HCT116 (cell line): ENCODE measurements at regions of chr11 and their contacts with region 1.

Region 1: DNA sequence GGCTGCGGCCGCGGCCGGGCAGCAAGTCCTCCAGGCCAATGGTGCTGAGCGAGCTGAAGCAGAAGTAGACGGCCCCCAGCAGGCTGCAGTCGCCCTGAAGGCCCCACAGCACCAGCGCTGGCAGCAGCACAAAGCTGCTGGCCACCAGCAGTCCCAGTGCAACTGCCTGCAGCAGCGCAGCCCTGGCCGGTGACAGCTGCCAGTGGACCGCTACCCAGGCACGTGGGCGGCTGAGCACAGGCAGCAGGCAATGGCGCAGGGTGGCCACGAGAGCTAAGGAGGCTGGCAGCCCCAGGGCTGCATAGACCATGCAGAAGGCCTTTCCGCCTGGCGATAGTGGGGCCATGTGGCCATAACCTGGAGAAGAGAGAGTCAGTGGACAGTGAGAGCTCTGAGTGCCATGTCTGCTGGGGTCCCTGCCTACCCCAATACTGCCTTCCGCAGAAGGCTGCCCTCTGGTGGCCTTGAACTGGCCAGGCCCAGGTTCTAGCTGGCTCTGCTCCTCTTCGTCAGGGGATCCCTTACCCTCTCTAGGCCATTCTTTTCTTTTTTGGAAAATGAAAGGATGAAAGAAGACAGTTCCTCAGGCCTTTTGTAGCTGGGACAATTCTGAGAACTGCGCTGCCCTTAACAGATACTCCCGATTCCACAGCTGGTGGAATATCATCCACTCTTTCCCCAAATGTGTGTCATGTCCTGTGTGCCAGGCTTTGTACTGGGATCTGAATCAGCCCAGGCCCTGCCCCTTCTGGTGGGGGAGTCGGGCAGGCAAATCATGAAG is 1.9 kb downstream of the KCNK7 start:
- DNase-seq: no peak
- ATAC-seq: peak; percentile 72
- H3K4me3 ChIP-seq: no peak overlapping the region
- H3K27ac ChIP-seq: peak overlapping the region; percentile 26; the same call in 1 of the 2 replicates
- H3K4me1 ChIP-seq: peaks cover 13 to 21% of the 10 kb centered on the region in 2 experiments
- H3K27me3 ChIP-seq: no peaks in the 10 kb centered on the region
- CTCF ChIP-seq: peak; percentile 52 to 86 (median 83); a peak in 5 of 6 replicates
- POLR2A ChIP-seq: no peak
- RAD21 ChIP-seq: peak; percentile 53

Region 2: GRCh38 chr11:65540297-65541092 is 53.2 kb before region 1 on chr11:
- CTCF ChIA-PET with region 1: interaction called, 28 read pairs
- POLR2A ChIA-PET with region 1: interaction called, 4 read pairs
- RAD21 ChIA-PET with region 1: interaction called, 3 to 5 read pairs
- intact Hi-C with region 1: no loop called
- DNase-seq: peak; percentile 64
- ATAC-seq: peak; percentile 73
- H3K4me3 ChIP-seq: peak overlapping the region; percentile 68 to 85
- H3K27ac ChIP-seq: peak overlapping the region; percentile 100
- H3K4me1 ChIP-seq: peaks cover 13 to 39% of the 10 kb centered on the region in 2 experiments; a peak in 3 of 4 replicates
- H3K27me3 ChIP-seq: no peaks in the 10 kb centered on the region
- CTCF ChIP-seq: peak in 2 of 3 experiments; percentile 82 to 85; a peak in 4 of 6 replicates
- POLR2A ChIP-seq: no peak
- RAD21 ChIP-seq: no peak

Region 3: GRCh38 chr11:65569973-65570918 is 23.5 kb before region 1 on chr11 and contains the start of gene ZNRD2:
- CTCF ChIA-PET with region 1: interaction called, 15 read pairs
- POLR2A ChIA-PET with region 1: interaction called, 3 read pairs
- RAD21 ChIA-PET with region 1: no interaction called
- intact Hi-C with region 1: no loop called
- DNase-seq: peak; percentile 97
- ATAC-seq: peak; percentile 72
- H3K4me3 ChIP-seq: peak within 1 kb of the TSS; percentile 97 to 100
- H3K27ac ChIP-seq: peak within 1 kb of the TSS; percentile 94
- H3K4me1 ChIP-seq: peaks cover 35 to 68% of the 10 kb centered on the region in 2 experiments
- H3K27me3 ChIP-seq: no peaks in the 10 kb centered on the region
- CTCF ChIP-seq: peak in 1 of 3 experiments; percentile 29; a peak in 2 of 6 replicates
- POLR2A ChIP-seq: peak; percentile 36
- RAD21 ChIP-seq: no peak
- total RNA-seq, gene ZNRD2: 66.8 TPM

Region 4: GRCh38 chr11:65575568-65576231 is 18.0 kb before region 1 on chr11 and contains the start of gene EHBP1L1:
- CTCF ChIA-PET with region 1: interaction called, 15 read pairs
- POLR2A ChIA-PET with region 1: interaction called, 3 read pairs
- RAD21 ChIA-PET with region 1: no interaction called
- intact Hi-C with region 1: no loop called
- DNase-seq: no peak
- ATAC-seq: peak; percentile 33
- H3K4me3 ChIP-seq: peak within 1 kb of the TSS; percentile 74 to 78
- H3K27ac ChIP-seq: peak within 1 kb of the TSS; percentile 97
- H3K4me1 ChIP-seq: peaks cover 47 to 62% of the 10 kb centered on the region in 2 experiments
- H3K27me3 ChIP-seq: no peaks in the 10 kb centered on the region
- CTCF ChIP-seq: no peak
- POLR2A ChIP-seq: peak; percentile 29
- RAD21 ChIP-seq: no peak
- total RNA-seq, gene EHBP1L1: 105 TPM

Region 5: DNA sequence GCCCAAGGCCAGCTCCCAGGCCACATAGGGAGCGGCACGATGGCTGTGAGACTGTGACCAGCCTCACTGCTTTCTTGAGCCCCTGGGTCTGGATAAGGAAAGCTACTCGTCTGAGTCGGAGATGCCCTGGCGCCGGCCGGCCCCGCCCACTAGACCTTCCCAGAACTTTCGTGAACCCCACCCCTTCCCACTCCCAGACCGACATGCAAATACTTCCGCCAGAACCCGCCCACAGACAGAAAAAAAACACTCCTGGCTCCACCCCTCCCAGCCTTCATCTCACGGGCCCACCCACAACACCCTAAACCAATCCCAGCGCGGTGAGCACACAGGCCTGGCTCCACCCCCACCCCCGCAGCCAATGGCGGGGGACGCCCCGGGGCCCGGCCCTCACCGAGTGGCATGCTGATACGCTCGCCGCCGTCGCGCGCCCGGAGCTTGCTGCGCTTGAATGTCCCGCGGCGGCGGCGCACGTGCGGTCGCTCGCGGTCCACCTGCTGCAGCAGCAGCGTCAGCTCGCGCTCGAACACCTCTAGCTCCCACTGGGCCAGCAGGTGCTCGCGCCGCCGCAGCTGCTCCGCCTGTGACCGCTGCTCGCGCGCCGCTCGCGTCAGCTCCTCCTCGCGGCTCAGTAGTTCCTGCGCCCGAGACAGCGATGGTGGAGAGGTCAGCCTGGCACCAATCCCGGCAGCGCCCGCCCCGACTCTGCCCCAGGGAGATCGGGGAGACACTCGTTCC is 13.3 kb after region 1 on chr11:
- CTCF ChIA-PET with region 1: interaction called, 13 read pairs
- POLR2A ChIA-PET with region 1: no interaction called
- RAD21 ChIA-PET with region 1: no interaction called
- intact Hi-C with region 1: no loop called
- DNase-seq: peak; percentile 89
- ATAC-seq: peak; percentile 98
- H3K4me3 ChIP-seq: peak overlapping the region; percentile 7 to 35; a peak in 3 of 4 replicates
- H3K27ac ChIP-seq: peak overlapping the region; percentile 67
- H3K4me1 ChIP-seq: peaks cover 8 to 44% of the 10 kb centered on the region in 2 experiments; a peak in 3 of 4 replicates
- H3K27me3 ChIP-seq: no peaks in the 10 kb centered on the region
- CTCF ChIP-seq: no peak
- POLR2A ChIP-seq: no peak
- RAD21 ChIP-seq: no peak

Region 6: GRCh38 chr11:65615229-65615941 is 21.7 kb after region 1 on chr11 and contains the start of gene PCNX3:
- CTCF ChIA-PET with region 1: interaction called, 15 read pairs
- POLR2A ChIA-PET with region 1: interaction called, 5 read pairs
- RAD21 ChIA-PET with region 1: no interaction called
- intact Hi-C with region 1: no loop called
- DNase-seq: peak; percentile 100
- ATAC-seq: peak; percentile 86
- H3K4me3 ChIP-seq: peak within 1 kb of the TSS; percentile 86 to 98
- H3K27ac ChIP-seq: peak within 1 kb of the TSS; percentile 86
- H3K4me1 ChIP-seq: peaks cover 10 to 43% of the 10 kb centered on the region in 2 experiments
- H3K27me3 ChIP-seq: no peaks in the 10 kb centered on the region
- CTCF ChIP-seq: no peak
- POLR2A ChIP-seq: no peak
- RAD21 ChIP-seq: no peak
- total RNA-seq, gene PCNX3: 50.4 TPM

Region 7: DNA sequence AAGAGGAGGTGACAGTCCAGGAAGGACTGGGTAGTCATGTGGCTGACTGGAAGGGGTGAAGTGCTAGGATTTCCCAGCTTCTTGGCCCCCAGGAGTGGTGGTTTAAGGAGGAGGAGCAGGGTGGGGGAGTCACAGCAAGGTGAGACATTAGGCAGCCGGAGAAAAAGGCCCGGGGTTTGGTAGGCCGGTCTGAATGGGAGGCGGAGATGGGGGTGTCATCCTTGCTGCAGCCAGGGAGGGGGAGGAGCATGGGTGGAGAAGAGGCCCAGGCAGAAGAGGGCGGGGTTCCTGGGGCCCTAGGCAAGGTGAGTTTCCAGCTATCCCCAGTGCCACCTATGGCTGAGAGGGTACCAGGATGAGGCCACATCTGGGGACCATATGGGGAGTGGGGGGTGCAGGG is 50.3 kb after region 1 on chr11:
- CTCF ChIA-PET with region 1: no interaction called
- POLR2A ChIA-PET with region 1: no interaction called
- RAD21 ChIA-PET with region 1: no interaction called
- intact Hi-C with region 1: no loop called
- DNase-seq: no peak
- ATAC-seq: peak; percentile 58
- H3K4me3 ChIP-seq: no peak overlapping the region
- H3K27ac ChIP-seq: peak overlapping the region; percentile 46; the same call in 1 of the 2 replicates
- H3K4me1 ChIP-seq: peaks cover 35 to 66% of the 10 kb centered on the region in 2 experiments
- H3K27me3 ChIP-seq: no peaks in the 10 kb centered on the region
- CTCF ChIP-seq: no peak
- POLR2A ChIP-seq: no peak
- RAD21 ChIP-seq: no peak